ENCODE measurements at regions of chr15 and their contacts with region 1.

Region 1: GRCh38 chr15:62631076-62631724 is 411.3 kb upstream of the TPM1 start:
- DNase-seq: no peak

Region 2: GRCh38 chr15:62071711-62072308 is 559.4 kb before region 1 on chr15:
- intact Hi-C with region 1: loop called in 1 of 2 experiments (anchors 5 kb)
- DNase-seq: no peak

Measured in posterior vena cava (tissue), 2 donors.